Calu3 (cell line): ENCODE measurements at regions of chr16 and their contacts with region 1.

Region 1: DNA sequence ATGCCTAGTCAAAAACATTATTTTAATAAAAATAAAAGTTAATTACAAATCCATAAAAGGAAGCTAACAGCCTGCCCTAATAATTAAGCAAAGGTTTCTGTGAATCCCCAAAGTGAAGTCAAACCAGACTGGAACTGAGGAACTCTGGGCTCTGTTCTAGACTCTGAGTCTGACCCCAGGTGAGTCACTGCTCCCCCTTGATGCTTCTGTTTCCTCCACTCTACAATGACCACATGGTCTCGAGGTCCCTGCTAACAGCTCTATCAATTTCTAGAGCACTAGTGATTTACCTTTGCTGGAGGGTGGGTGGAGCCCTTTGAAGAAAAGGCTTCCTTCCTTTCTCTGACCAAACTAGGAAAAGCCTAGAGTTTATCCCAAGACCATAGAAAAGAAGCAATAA is 32.4 kb downstream of the XPO6 start:
- DNase-seq: no peak
- H3K4me3 Mint-ChIP-seq: no peak overlapping the region
- H3K27ac Mint-ChIP-seq: no peak overlapping the region
- H3K4me1 Mint-ChIP-seq: peaks cover 40% of the 10 kb centered on the region
- H3K27me3 Mint-ChIP-seq: no peaks in the 10 kb centered on the region
- CTCF ChIP-seq: no peak

Region 2: DNA sequence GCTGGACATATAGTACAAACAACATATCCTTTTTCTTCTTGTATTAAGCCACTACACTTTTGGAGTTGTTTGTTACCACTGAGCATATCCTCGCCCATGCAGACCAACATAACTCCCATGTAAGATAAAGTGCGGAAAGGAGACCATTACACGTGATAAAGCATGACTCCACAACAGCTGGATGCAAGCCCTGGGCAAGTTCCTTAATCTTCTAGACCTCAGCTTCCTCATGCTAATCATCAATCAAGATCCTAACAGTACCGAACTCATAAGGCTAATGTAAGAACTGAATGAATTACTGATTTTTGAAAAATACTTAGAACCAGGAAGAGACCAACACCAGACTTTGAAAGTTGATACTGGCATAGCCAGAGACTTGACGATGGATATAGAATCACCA is 68.9 kb before region 1 on chr16:
- CTCF ChIA-PET with region 1: no interaction called
- intact Hi-C with region 1: loop called (anchors 10 kb)
- DNase-seq: no peak
- H3K4me3 Mint-ChIP-seq: no peak overlapping the region
- H3K27ac Mint-ChIP-seq: no peak overlapping the region
- H3K4me1 Mint-ChIP-seq: no peaks in the 10 kb centered on the region
- H3K27me3 Mint-ChIP-seq: no peaks in the 10 kb centered on the region
- CTCF ChIP-seq: no peak